Activated CD4-positive, alpha-beta T cell treated with anti-CD3 and anti-CD28 coated beads for 36 hours (primary cell): ENCODE measurements at regions of chr3 and their contacts with region 1.

Region 1: DNA sequence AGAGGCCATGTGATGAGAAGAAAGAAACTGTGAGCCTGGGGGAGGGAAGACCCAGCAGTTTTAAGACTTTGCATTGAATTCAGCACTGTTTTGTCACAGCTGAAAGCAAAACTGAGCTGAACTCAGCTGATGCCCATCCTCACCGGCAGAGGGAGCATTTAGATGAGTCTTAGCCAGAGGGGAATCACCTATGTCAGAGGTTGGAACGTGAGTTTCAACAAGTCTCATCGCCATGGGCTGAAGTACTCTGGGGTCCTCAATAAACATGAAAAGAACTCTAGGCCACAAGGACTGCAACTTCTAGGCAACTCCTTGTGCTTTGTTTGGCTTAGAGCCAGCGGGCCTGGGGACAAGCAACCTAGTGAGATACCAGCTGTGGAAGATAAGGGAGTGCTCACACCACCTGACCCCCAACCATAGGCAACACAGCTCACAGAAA is 324.5 kb downstream of the TBL1XR1 start:
- DNase-seq: peak; percentile 75
- ATAC-seq: peak; percentile 98
- H3K4me3 Mint-ChIP-seq: no peak overlapping the region
- H3K27ac Mint-ChIP-seq: peak overlapping the region; percentile 74
- H3K4me1 Mint-ChIP-seq: peaks cover 4% of the 10 kb centered on the region
- H3K27me3 Mint-ChIP-seq: peaks cover 3% of the 10 kb centered on the region

Region 2: DNA sequence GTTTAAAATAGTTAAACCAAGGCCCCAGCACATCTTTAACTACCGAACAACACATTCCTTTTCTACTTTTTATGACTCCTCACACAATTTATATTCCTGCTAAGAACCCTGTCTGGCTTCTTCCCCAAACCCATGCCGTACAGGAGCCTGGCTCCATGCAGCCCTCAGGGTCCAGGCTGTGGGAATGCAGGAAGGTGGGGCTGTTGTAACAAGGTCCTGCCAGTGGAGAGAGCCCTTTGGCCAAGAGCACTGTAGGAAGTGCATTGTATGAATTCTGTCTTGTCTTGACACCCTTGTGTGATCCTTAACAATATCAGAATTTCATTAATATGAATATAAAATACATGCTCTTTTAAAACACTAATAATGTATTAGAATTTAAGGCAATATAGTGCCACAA is 239.3 kb before region 1 on chr3:
- CTCF ChIA-PET with region 1: no interaction called
- POLR2A ChIA-PET with region 1: no interaction called
- intact Hi-C with region 1: no loop called
- DNase-seq: no peak
- ATAC-seq: no peak
- H3K4me3 Mint-ChIP-seq: no peak overlapping the region
- H3K27ac Mint-ChIP-seq: no peak overlapping the region
- H3K4me1 Mint-ChIP-seq: no peaks in the 10 kb centered on the region
- H3K27me3 Mint-ChIP-seq: peaks cover 2% of the 10 kb centered on the region

Region 3: DNA sequence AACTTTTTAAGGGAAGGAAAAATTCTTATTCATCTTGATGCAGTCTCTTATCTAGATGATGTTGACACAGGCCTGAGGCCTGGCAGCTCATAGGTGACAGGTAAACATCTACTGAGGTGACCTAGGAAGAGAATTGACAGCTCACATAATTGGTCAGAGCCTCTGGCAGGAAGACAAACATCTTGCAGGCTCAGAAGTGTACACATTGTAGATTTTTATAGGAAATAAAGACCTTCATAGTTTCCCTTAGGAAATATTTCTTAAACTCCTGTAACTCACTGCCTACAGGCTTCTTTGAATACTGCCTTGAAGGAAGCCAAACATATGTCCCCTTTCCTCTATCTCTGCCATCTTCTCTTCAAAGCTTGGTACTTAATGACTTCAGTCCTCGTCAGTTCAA is 16.8 kb before region 1 on chr3:
- CTCF ChIA-PET with region 1: interaction called, 17 read pairs
- POLR2A ChIA-PET with region 1: no interaction called
- intact Hi-C with region 1: no loop called
- DNase-seq: no peak
- ATAC-seq: no peak
- H3K4me3 Mint-ChIP-seq: no peak overlapping the region
- H3K27ac Mint-ChIP-seq: no peak overlapping the region
- H3K4me1 Mint-ChIP-seq: no peaks in the 10 kb centered on the region
- H3K27me3 Mint-ChIP-seq: peaks cover 8% of the 10 kb centered on the region

Region 4: GRCh38 chr3:176861137-176861536 is 11.7 kb before region 1 on chr3:
- CTCF ChIA-PET with region 1: interaction called, 17 read pairs
- POLR2A ChIA-PET with region 1: no interaction called
- intact Hi-C with region 1: no loop called
- DNase-seq: no peak
- ATAC-seq: no peak
- H3K4me3 Mint-ChIP-seq: no peak overlapping the region
- H3K27ac Mint-ChIP-seq: no peak overlapping the region
- H3K4me1 Mint-ChIP-seq: no peaks in the 10 kb centered on the region
- H3K27me3 Mint-ChIP-seq: peaks cover 6% of the 10 kb centered on the region

Region 5: GRCh38 chr3:176939022-176939817 is 66.4 kb after region 1 on chr3:
- CTCF ChIA-PET with region 1: interaction called, 58 read pairs
- POLR2A ChIA-PET with region 1: no interaction called
- intact Hi-C with region 1: loop called (anchors 1 kb)
- DNase-seq: peak; percentile 54
- ATAC-seq: peak; percentile 81
- H3K4me3 Mint-ChIP-seq: no peak overlapping the region
- H3K27ac Mint-ChIP-seq: no peak overlapping the region
- H3K4me1 Mint-ChIP-seq: no peaks in the 10 kb centered on the region
- H3K27me3 Mint-ChIP-seq: peaks cover 10% of the 10 kb centered on the region

Region 6: DNA sequence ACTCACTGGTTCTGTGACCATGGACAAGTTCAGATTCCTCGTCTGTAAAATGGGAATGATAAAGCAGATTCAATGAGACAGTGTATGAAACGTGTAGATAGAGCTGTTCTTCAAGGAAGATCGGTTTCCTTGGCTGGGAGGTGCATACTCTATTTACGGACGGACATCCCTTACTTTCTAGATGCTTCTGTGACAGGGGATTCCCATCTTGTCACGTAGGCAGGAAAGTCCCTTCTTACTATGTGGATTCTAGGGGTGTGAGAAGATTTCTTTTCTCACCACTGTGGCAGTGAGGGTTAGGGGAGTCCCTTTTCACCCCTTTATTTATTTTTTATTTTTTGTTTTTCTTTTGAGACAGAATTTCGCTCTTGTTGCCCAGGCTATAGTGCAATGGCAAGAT is 505.4 kb after region 1 on chr3:
- CTCF ChIA-PET with region 1: no interaction called
- POLR2A ChIA-PET with region 1: no interaction called
- intact Hi-C with region 1: loop called in 1 of 2 experiments (anchors 10 kb)
- DNase-seq: no peak
- ATAC-seq: no peak
- H3K4me3 Mint-ChIP-seq: no peak overlapping the region
- H3K27ac Mint-ChIP-seq: no peak overlapping the region
- H3K4me1 Mint-ChIP-seq: peaks cover 2% of the 10 kb centered on the region
- H3K27me3 Mint-ChIP-seq: no peaks in the 10 kb centered on the region

Region 7: DNA sequence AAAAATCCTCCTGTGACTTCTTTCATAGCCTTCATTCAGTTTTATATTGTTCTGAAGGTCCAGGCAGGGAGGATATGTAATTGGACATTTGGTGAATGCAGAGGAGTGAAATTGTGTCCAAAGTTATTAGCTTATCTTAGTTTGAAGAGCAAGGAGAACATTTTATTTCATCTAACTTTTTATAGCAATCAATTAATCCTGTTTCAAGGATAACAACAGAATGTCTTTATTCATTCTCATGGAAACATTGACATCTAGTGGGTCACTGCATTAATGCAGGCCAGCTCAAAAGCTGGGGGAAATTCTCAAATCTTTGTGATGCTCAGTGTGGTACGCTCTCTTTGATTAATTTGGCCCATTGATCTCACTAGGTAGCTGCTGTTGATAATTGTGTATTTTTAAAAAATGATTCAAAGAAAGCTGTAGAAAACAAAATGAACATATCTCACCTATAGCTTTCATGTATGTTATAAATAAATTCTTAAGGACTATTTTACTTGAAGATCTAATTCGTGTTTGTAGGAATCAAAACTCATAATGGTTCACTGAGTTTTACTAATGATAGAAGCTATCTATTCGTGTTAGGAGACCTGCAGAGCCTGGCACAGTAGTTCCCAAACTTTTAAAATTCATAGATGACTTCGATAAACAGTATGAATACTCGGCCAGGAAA is 1512.6 kb after region 1 on chr3:
- CTCF ChIA-PET with region 1: interaction called, 5 read pairs
- POLR2A ChIA-PET with region 1: no interaction called
- intact Hi-C with region 1: loop called (anchors 2 kb)
- DNase-seq: peak; percentile 13
- ATAC-seq: no peak
- H3K4me3 Mint-ChIP-seq: no peak overlapping the region
- H3K27ac Mint-ChIP-seq: no peak overlapping the region
- H3K4me1 Mint-ChIP-seq: no peaks in the 10 kb centered on the region
- H3K27me3 Mint-ChIP-seq: peaks cover 9% of the 10 kb centered on the region